ENCODE measurements at regions of chr3 and their contacts with region 1.

Region 1: GRCh38 chr3:118863731-118864322 is 170.8 kb downstream of the IGSF11 start:
- DNase-seq: peak in 1 of 2 experiments; percentile 59
- H3K4me3 ChIP-seq: no peak overlapping the region
- H3K27ac ChIP-seq: no peak overlapping the region
- H3K4me1 ChIP-seq: no peaks in the 10 kb centered on the region
- H3K27me3 ChIP-seq: no peaks in the 10 kb centered on the region
- CTCF ChIP-seq: peak; percentile 46 to 75 (median 67)
- EP300 ChIP-seq: no peak
- POLR2A ChIP-seq: no peak
- RAD21 ChIP-seq: peak; percentile 40 to 58; a peak in 3 of 4 replicates

Region 2: DNA sequence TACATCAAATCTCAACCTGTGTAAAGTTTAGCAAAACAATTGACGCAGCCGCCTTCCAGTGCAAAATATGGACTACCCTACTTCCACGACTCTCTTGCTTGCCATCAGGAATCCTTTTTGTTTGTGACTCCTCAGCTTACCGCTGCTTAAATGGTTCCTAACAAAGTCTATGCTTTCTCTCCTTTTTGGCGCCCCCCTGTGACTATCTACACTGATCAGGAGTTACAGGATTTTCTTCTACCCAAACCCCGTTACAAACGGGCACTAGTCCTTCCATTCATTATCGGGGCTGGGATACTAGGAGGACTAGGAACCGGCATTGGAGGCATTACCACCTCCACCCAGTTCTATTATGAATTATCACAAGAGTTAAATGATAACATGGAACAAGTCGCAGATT is 13.1 kb before region 1 on chr3:
- CTCF ChIA-PET with region 1: interaction called, 14 read pairs
- POLR2A ChIA-PET with region 1: no interaction called
- DNase-seq: peak in 1 of 2 experiments; percentile 51
- H3K4me3 ChIP-seq: no peak overlapping the region
- H3K27ac ChIP-seq: no peak overlapping the region
- H3K4me1 ChIP-seq: no peaks in the 10 kb centered on the region
- H3K27me3 ChIP-seq: no peaks in the 10 kb centered on the region
- CTCF ChIP-seq: peak in 2 of 3 experiments; percentile 23 to 46; a peak in 1 of 4 replicates
- EP300 ChIP-seq: no peak
- POLR2A ChIP-seq: no peak
- RAD21 ChIP-seq: peak in 1 of 2 experiments; percentile 46; a peak in 2 of 4 replicates

Region 3: GRCh38 chr3:118932822-118933558 is 69.2 kb after region 1 on chr3:
- CTCF ChIA-PET with region 1: no interaction called
- POLR2A ChIA-PET with region 1: no interaction called
- DNase-seq: no peak
- H3K4me3 ChIP-seq: no peak overlapping the region
- H3K27ac ChIP-seq: no peak overlapping the region
- H3K4me1 ChIP-seq: no peaks in the 10 kb centered on the region
- H3K27me3 ChIP-seq: no peaks in the 10 kb centered on the region
- CTCF ChIP-seq: no peak
- EP300 ChIP-seq: no peak
- POLR2A ChIP-seq: no peak
- RAD21 ChIP-seq: no peak

Measured in H1 (cell line).